ENCODE measurements at regions of chr4 and their contacts with region 1.

Region 1: GRCh38 chr4:38519666-38520065 is 144.3 kb upstream of the KLF3 start:
- DNase-seq: no peak
- H3K4me3 ChIP-seq: no peak overlapping the region
- H3K27ac ChIP-seq: no peak overlapping the region
- H3K4me1 ChIP-seq: no peaks in the 10 kb centered on the region
- H3K27me3 ChIP-seq: no peaks in the 10 kb centered on the region
- CTCF ChIP-seq: no peak

Region 2: GRCh38 chr4:38730830-38731646 is 211.4 kb after region 1 on chr4:
- CTCF ChIA-PET with region 1: no interaction called
- dilution Hi-C with region 1: no loop called
- in situ Hi-C with region 1: no loop called
- intact Hi-C with region 1: loop called (anchors 2 kb)
- DNase-seq: peak; percentile 86
- H3K4me3 ChIP-seq: no peak overlapping the region
- H3K27ac ChIP-seq: no peak overlapping the region
- H3K4me1 ChIP-seq: peaks cover 12% of the 10 kb centered on the region
- H3K27me3 ChIP-seq: no peaks in the 10 kb centered on the region
- CTCF ChIP-seq: peak; percentile 94 to 95

Measured in mammary epithelial cell (primary cell).